HepG2 (cell line): ENCODE measurements at regions of chr16 and their contacts with region 1.

Region 1: DNA sequence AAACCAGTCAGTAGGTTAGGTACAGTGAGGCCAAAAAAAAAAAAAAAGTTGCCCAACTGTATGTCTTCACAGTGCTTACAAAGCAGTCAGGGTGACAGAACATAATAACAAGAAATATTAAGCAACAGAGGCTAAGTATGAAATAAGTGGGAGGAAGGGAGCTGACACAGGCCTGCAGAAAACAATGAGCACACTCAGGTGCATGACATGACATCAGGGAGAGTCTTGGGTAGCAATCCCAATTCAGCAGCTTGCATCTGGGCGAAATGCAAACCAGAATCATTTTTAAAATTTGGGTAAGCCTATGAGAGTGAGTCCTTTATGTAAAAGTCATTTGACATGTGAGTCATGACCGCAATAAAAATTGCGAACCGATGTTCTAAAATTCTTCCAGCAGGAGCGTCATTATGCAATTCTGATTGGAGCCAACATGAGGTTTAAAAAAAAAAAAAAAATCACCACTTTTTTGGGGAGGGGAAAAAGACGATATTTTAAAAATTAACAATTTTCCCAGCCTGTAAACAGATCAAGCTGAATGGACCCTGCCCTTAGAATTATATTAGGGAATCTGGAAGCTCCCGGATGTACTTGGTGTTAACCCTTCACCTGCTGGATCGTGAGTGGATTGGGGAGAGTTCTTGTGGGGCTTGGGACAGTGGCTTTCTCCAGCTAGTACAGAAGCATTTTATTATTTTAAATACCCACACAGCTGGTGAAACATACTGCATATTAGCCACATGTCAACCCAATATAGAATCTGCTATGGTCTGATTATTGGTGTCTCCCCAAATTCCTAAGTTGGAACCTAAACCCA is 127.9 kb downstream of the NPIPB5 start:
- DNase-seq: no peak
- ATAC-seq: no peak
- H3K4me3 ChIP-seq: no peak overlapping the region
- H3K27ac ChIP-seq: no peak overlapping the region
- H3K4me1 ChIP-seq: no peaks in the 10 kb centered on the region
- H3K27me3 ChIP-seq: peaks cover 0 to 14% of the 10 kb centered on the region in 2 experiments; a peak in 2 of 5 replicates
- CTCF ChIP-seq: no peak
- EP300 ChIP-seq: no peak
- POLR2A ChIP-seq: no peak
- RAD21 ChIP-seq: no peak

Region 2: DNA sequence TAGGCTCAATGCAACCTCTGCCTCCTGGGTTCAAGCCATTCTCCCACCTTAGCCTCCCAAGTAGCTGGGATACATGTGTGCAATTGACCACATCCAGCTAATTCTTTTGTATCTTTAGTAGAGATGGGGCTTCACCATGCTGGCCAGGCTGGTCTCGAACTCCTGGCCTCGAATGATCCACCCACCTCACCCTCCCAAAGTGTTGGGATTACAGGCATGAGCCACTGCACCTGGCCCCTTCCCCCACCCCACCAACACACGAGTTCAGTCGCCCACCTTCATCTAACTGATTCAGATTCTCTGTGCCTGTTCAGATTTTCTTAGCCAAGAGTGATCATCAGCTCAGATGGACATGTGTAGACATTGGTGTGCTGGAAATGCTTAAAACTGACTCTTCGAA is 1064.2 kb before region 1 on chr16:
- CTCF ChIA-PET with region 1: no interaction called
- POLR2A ChIA-PET with region 1: no interaction called
- in situ Hi-C with region 1: no loop called
- intact Hi-C with region 1: loop called (anchors 10 kb)
- DNase-seq: no peak
- ATAC-seq: no peak
- H3K4me3 ChIP-seq: no peak overlapping the region
- H3K27ac ChIP-seq: no peak overlapping the region
- H3K4me1 ChIP-seq: no peaks in the 10 kb centered on the region
- H3K27me3 ChIP-seq: peaks cover 3 to 20% of the 10 kb centered on the region in 2 experiments; a peak in 4 of 5 replicates
- CTCF ChIP-seq: no peak
- EP300 ChIP-seq: no peak
- POLR2A ChIP-seq: no peak
- RAD21 ChIP-seq: no peak